GM12878 (cell line): ENCODE measurements at regions of chr20 and their contacts with region 1.

Region 1: GRCh38 chr20:50987592-50988210 is 29.1 kb downstream of the MOCS3 start:
- DNase-seq: peak; percentile 16
- ATAC-seq: peak; percentile 96
- H3K4me3 ChIP-seq: no peak overlapping the region
- H3K27ac ChIP-seq: no peak overlapping the region
- H3K4me1 ChIP-seq: no peaks in the 10 kb centered on the region
- H3K27me3 ChIP-seq: no peaks in the 10 kb centered on the region; a peak in 1 of 4 replicates
- CTCF ChIP-seq: peak; percentile 81 to 91 (median 82)
- EP300 ChIP-seq: no peak
- POLR2A ChIP-seq: no peak
- RAD21 ChIP-seq: peak; percentile 82

Region 2: DNA sequence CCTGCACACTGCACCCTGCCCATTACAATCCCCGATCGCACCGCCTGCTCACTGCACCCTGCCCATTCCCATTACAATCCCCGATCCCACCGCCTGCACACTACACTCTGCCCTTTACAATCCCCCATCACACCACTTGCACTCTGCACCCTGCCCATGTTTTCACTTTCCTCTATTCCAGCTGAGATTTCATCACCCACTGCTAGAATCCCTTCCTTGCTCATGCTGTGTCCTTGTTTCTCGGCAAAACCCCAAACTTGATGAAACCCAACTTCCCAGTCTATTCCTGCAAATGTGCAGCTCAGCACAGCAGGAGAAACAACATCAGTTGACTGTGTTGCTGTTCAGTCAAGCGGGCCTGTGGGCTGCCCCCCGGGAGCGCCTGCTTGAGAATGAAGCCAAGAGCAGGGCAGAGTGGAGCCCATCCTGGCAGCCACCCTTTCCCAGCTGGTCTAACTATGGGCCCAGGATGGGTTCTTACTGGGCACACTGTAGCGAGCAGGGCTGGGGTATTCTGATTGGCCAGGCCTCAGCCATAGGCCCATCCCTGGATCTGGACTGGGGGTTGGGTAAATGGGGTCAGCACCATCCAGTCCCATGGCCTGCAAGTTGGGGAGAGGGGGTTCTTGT is 11.9 kb before region 1 on chr20:
- CTCF ChIA-PET with region 1: interaction called, 14 read pairs
- POLR2A ChIA-PET with region 1: no interaction called
- RAD21 ChIA-PET with region 1: no interaction called
- SMC1A ChIA-PET with region 1: interaction called, 3 read pairs
- in situ Hi-C with region 1: no loop called
- intact Hi-C with region 1: no loop called
- DNase-seq: no peak
- ATAC-seq: no peak
- H3K4me3 ChIP-seq: no peak overlapping the region
- H3K27ac ChIP-seq: no peak overlapping the region
- H3K4me1 ChIP-seq: no peaks in the 10 kb centered on the region
- H3K27me3 ChIP-seq: no peaks in the 10 kb centered on the region; a peak in 2 of 4 replicates
- CTCF ChIP-seq: no peak
- EP300 ChIP-seq: no peak
- POLR2A ChIP-seq: no peak
- RAD21 ChIP-seq: no peak

Region 3: DNA sequence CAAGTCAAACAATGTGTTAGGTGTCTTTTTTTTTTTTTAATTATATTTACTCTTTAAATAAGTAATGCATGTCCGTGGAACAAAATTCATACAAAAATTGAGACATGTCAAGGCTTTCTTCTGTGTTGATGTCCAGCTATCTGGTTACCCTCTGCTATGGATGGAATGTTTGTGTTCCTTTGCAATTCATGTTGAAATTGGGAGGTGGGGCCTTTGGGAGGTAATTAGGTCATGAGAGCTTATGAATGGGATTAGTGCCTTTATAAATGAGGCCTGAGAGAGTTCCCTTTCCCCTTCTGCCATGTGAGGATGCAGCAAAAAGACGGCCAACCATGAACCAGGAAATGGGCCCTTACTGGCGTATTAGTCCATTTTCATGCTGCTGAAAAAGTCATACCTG is 118.3 kb after region 1 on chr20:
- CTCF ChIA-PET with region 1: no interaction called
- POLR2A ChIA-PET with region 1: no interaction called
- RAD21 ChIA-PET with region 1: no interaction called
- SMC1A ChIA-PET with region 1: no interaction called
- in situ Hi-C with region 1: no loop called
- intact Hi-C with region 1: no loop called
- DNase-seq: no peak
- ATAC-seq: no peak
- H3K4me3 ChIP-seq: no peak overlapping the region
- H3K27ac ChIP-seq: no peak overlapping the region
- H3K4me1 ChIP-seq: no peaks in the 10 kb centered on the region
- H3K27me3 ChIP-seq: peaks cover 0 to 3% of the 10 kb centered on the region in 2 experiments; a peak in 2 of 4 replicates
- CTCF ChIP-seq: no peak
- EP300 ChIP-seq: no peak
- POLR2A ChIP-seq: no peak
- RAD21 ChIP-seq: no peak

Region 4: GRCh38 chr20:51298141-51298749 is 310.5 kb after region 1 on chr20:
- CTCF ChIA-PET with region 1: interaction called, 18 read pairs
- POLR2A ChIA-PET with region 1: no interaction called
- RAD21 ChIA-PET with region 1: interaction called, 3 read pairs
- SMC1A ChIA-PET with region 1: interaction called, 4 read pairs
- in situ Hi-C with region 1: no loop called
- intact Hi-C with region 1: no loop called
- DNase-seq: no peak
- ATAC-seq: no peak
- H3K4me3 ChIP-seq: no peak overlapping the region
- H3K27ac ChIP-seq: no peak overlapping the region
- H3K4me1 ChIP-seq: no peaks in the 10 kb centered on the region
- H3K27me3 ChIP-seq: peaks cover 0 to 1% of the 10 kb centered on the region in 2 experiments; a peak in 1 of 4 replicates
- CTCF ChIP-seq: no peak
- EP300 ChIP-seq: no peak
- POLR2A ChIP-seq: no peak
- RAD21 ChIP-seq: no peak

Region 5: GRCh38 chr20:51306503-51307358 is 319.0 kb after region 1 on chr20:
- CTCF ChIA-PET with region 1: interaction called, 177 read pairs
- POLR2A ChIA-PET with region 1: no interaction called
- RAD21 ChIA-PET with region 1: interaction called, 23 read pairs
- SMC1A ChIA-PET with region 1: interaction called, 28 read pairs
- in situ Hi-C with region 1: loop called (anchors 5 kb)
- intact Hi-C with region 1: loop called (anchors 1 kb)
- DNase-seq: no peak
- ATAC-seq: peak; percentile 100
- H3K4me3 ChIP-seq: no peak overlapping the region
- H3K27ac ChIP-seq: no peak overlapping the region
- H3K4me1 ChIP-seq: no peaks in the 10 kb centered on the region
- H3K27me3 ChIP-seq: peaks cover 1 to 2% of the 10 kb centered on the region in 2 experiments; a peak in 3 of 4 replicates
- CTCF ChIP-seq: peak; percentile 89 to 91 (median 89)
- EP300 ChIP-seq: no peak
- POLR2A ChIP-seq: no peak
- RAD21 ChIP-seq: peak; percentile 83

Region 6: GRCh38 chr20:51326201-51326819 is 338.6 kb after region 1 on chr20:
- CTCF ChIA-PET with region 1: interaction called, 39 read pairs
- POLR2A ChIA-PET with region 1: no interaction called
- RAD21 ChIA-PET with region 1: interaction called, 17 read pairs
- SMC1A ChIA-PET with region 1: interaction called, 15 read pairs
- in situ Hi-C with region 1: no loop called
- intact Hi-C with region 1: loop called (anchors 2 kb)
- DNase-seq: no peak
- ATAC-seq: peak; percentile 59
- H3K4me3 ChIP-seq: no peak overlapping the region
- H3K27ac ChIP-seq: no peak overlapping the region
- H3K4me1 ChIP-seq: no peaks in the 10 kb centered on the region
- H3K27me3 ChIP-seq: no peaks in the 10 kb centered on the region; a peak in 2 of 4 replicates
- CTCF ChIP-seq: peak; percentile 46 to 67 (median 65)
- EP300 ChIP-seq: no peak
- POLR2A ChIP-seq: no peak
- RAD21 ChIP-seq: peak; percentile 26; the same call in 1 of the 2 replicates

Region 7: DNA sequence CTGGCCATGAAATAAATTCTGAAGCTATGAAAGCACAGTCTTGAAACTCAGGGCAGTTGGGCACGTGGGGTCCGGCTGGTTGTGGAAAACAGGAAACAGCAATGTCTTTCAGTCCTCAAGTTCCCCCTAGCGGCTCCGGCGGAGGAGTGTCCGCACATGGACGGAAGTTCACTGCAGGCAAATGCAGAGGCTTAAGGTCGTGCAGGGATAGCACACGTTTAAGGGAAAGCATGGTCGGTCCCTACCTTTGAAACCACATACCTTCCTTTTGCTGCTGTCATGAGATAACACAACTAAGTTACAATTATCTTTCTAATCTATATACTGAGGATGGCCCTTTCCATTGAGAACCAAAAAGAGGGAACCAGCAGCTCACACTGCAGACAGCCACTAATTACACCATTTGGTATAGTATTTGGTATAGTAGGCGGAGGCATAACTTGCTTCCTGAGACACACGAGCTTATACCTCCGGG is 607.4 kb after region 1 on chr20:
- CTCF ChIA-PET with region 1: interaction called, 11 read pairs
- POLR2A ChIA-PET with region 1: no interaction called
- RAD21 ChIA-PET with region 1: interaction called, 7 read pairs
- SMC1A ChIA-PET with region 1: interaction called, 10 read pairs
- in situ Hi-C with region 1: no loop called
- intact Hi-C with region 1: loop called (anchors 10 kb)
- DNase-seq: peak; percentile 45
- ATAC-seq: peak; percentile 98
- H3K4me3 ChIP-seq: no peak overlapping the region
- H3K27ac ChIP-seq: 0 out of 2 replicates have a peak overlapping the region, but pooled peaks have one; percentile 2
- H3K4me1 ChIP-seq: peaks cover 16% of the 10 kb centered on the region
- H3K27me3 ChIP-seq: no peaks in the 10 kb centered on the region; a peak in 1 of 4 replicates
- CTCF ChIP-seq: peak; percentile 89 to 97 (median 92)
- EP300 ChIP-seq: peak in 1 of 2 experiments; percentile 29; a peak in 1 of 4 replicates
- POLR2A ChIP-seq: no peak
- RAD21 ChIP-seq: peak; percentile 92

Region 8: GRCh38 chr20:51624157-51624731 is 636.5 kb after region 1 on chr20:
- CTCF ChIA-PET with region 1: interaction called, 11 read pairs
- POLR2A ChIA-PET with region 1: no interaction called
- RAD21 ChIA-PET with region 1: interaction called, 12 read pairs
- SMC1A ChIA-PET with region 1: interaction called, 5 read pairs
- in situ Hi-C with region 1: loop called (anchors 10 kb)
- intact Hi-C with region 1: loop called (anchors 5 kb)
- DNase-seq: no peak
- ATAC-seq: peak; percentile 83
- H3K4me3 ChIP-seq: no peak overlapping the region
- H3K27ac ChIP-seq: no peak overlapping the region
- H3K4me1 ChIP-seq: peaks cover 22% of the 10 kb centered on the region
- H3K27me3 ChIP-seq: no peaks in the 10 kb centered on the region; a peak in 1 of 4 replicates
- CTCF ChIP-seq: peak; percentile 72 to 82 (median 80); a peak in 5 of 6 replicates
- EP300 ChIP-seq: no peak
- POLR2A ChIP-seq: no peak
- RAD21 ChIP-seq: peak; percentile 69